Activated CD8-positive, alpha-beta T cell treated with anti-CD3 and anti-CD28 coated beads for 36 hours (primary cell): ENCODE measurements at regions of chr2 and their contacts with region 1.

Region 1: GRCh38 chr2:26605195-26605998 is 35.8 kb downstream of the CIB4 start:
- DNase-seq: peak; percentile 48
- ATAC-seq: peak; percentile 61
- H3K4me3 Mint-ChIP-seq: no peak overlapping the region
- H3K27ac Mint-ChIP-seq: no peak overlapping the region
- H3K4me1 Mint-ChIP-seq: peaks cover 18% of the 10 kb centered on the region
- H3K27me3 Mint-ChIP-seq: peaks cover 5% of the 10 kb centered on the region
- CTCF ChIP-seq: peak; percentile 84

Region 2: GRCh38 chr2:26513261-26513660 is 92.1 kb before region 1 on chr2:
- CTCF ChIA-PET with region 1: no interaction called
- POLR2A ChIA-PET with region 1: no interaction called
- intact Hi-C with region 1: no loop called
- DNase-seq: no peak
- ATAC-seq: no peak
- H3K4me3 Mint-ChIP-seq: no peak overlapping the region
- H3K27ac Mint-ChIP-seq: no peak overlapping the region
- H3K4me1 Mint-ChIP-seq: no peaks in the 10 kb centered on the region
- H3K27me3 Mint-ChIP-seq: no peaks in the 10 kb centered on the region
- CTCF ChIP-seq: no peak

Region 3: GRCh38 chr2:26591619-26592505 is 13.5 kb before region 1 on chr2:
- CTCF ChIA-PET with region 1: interaction called, 18 read pairs
- POLR2A ChIA-PET with region 1: no interaction called
- intact Hi-C with region 1: no loop called
- DNase-seq: peak; percentile 28
- ATAC-seq: peak; percentile 75
- H3K4me3 Mint-ChIP-seq: no peak overlapping the region
- H3K27ac Mint-ChIP-seq: no peak overlapping the region
- H3K4me1 Mint-ChIP-seq: peaks cover 11% of the 10 kb centered on the region
- H3K27me3 Mint-ChIP-seq: peaks cover 18% of the 10 kb centered on the region
- CTCF ChIP-seq: no peak

Region 4: DNA sequence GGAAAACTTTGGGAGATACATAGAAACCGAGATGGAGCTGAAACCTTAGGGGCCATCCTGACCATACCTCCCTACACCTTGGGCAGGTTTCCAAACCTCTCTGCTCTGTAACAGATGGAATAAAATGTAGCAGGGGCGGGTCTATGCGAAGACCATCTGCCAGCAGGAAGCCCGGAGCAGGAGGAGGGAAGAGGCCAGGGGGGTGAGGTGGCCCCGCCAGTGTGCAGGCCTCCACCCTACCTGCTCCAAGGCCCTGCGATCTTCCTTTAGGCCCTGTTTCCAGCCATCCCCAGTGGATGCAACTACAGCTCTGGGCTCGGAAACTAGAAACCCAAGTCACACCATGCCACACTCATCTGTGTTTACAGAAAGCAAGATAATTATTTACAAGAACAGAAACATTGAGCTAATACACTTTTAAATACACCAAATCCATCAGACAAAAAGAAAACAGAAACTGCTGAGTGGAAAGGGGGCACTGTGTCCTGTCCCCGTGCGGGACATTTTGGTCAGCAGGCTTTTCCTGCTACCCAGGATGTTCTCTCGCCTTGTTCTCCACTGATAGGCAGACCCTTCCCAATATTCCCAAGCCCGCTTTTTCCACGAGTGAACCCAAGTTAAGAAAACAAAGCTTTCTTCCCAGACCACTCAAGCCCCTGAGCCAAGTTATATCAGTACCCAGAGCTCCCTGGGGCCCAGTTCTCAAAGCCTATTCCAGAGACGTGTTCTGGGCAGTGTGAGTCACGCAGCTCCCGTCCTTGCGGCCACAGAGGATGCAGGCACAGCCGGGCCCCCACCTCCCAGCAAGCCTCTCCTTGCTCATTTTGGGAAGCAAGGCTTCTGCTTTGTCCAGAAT is 18.4 kb after region 1 on chr2:
- CTCF ChIA-PET with region 1: interaction called, 11 read pairs
- POLR2A ChIA-PET with region 1: no interaction called
- intact Hi-C with region 1: no loop called
- DNase-seq: no peak
- ATAC-seq: no peak
- H3K4me3 Mint-ChIP-seq: no peak overlapping the region
- H3K27ac Mint-ChIP-seq: no peak overlapping the region
- H3K4me1 Mint-ChIP-seq: peaks cover 4% of the 10 kb centered on the region
- H3K27me3 Mint-ChIP-seq: peaks cover 4% of the 10 kb centered on the region
- CTCF ChIP-seq: no peak

Region 5: GRCh38 chr2:26636996-26637395 is 31.6 kb after region 1 on chr2:
- CTCF ChIA-PET with region 1: interaction called, 15 read pairs
- POLR2A ChIA-PET with region 1: no interaction called
- intact Hi-C with region 1: no loop called
- DNase-seq: no peak
- ATAC-seq: no peak
- H3K4me3 Mint-ChIP-seq: no peak overlapping the region
- H3K27ac Mint-ChIP-seq: no peak overlapping the region
- H3K4me1 Mint-ChIP-seq: no peaks in the 10 kb centered on the region
- H3K27me3 Mint-ChIP-seq: peaks cover 9% of the 10 kb centered on the region
- CTCF ChIP-seq: no peak

Region 6: GRCh38 chr2:26745609-26746327 is 140.4 kb after region 1 on chr2:
- CTCF ChIA-PET with region 1: interaction called, 162 read pairs
- POLR2A ChIA-PET with region 1: no interaction called
- intact Hi-C with region 1: loop called (anchors 2 kb)
- DNase-seq: peak; percentile 91
- ATAC-seq: peak; percentile 79
- H3K4me3 Mint-ChIP-seq: no peak overlapping the region
- H3K27ac Mint-ChIP-seq: no peak overlapping the region
- H3K4me1 Mint-ChIP-seq: peaks cover 3% of the 10 kb centered on the region
- H3K27me3 Mint-ChIP-seq: no peaks in the 10 kb centered on the region
- CTCF ChIP-seq: peak; percentile 86